CD8-positive, alpha-beta T cell (primary cell): ENCODE measurements at regions of chr4 and their contacts with region 1.

Region 1: GRCh38 chr4:26325191-26325590 is 4.4 kb downstream of the RBPJ start:
- DNase-seq: peak in 5 of 9 experiments; percentile 7 to 71 (median 22)
- ATAC-seq: peak; percentile 35
- H3K4me3 ChIP-seq: no peak overlapping the region
- H3K4me3 Mint-ChIP-seq: no peak overlapping the region
- H3K27ac ChIP-seq: no peak overlapping the region
- H3K27ac Mint-ChIP-seq: no peak overlapping the region
- H3K4me1 ChIP-seq: peaks cover 14% of the 10 kb centered on the region
- H3K4me1 Mint-ChIP-seq: peaks cover 52% of the 10 kb centered on the region
- H3K27me3 ChIP-seq: no peaks in the 10 kb centered on the region
- H3K27me3 Mint-ChIP-seq: no peaks in the 10 kb centered on the region
- CTCF ChIP-seq: peak; percentile 53

Region 2: DNA sequence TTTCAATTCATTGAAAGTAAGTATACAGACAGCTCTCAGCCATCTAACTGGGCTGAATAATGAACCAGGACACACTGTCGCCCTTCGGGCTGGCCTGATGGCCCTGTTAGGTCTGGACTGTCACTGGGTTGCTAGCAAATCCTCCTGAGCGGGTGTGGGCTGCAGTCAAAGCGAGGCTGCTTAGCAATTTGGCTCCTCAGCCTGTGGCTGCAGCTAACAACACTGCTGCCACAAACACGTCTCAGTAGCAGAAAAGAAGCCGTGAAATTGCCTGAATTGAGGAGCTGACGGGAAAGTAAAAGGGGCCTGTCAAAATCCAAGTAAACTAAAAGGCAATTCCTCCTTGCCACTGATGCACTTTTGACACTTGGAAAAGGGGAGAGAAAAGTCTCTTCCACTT is 338.4 kb before region 1 on chr4:
- CTCF ChIA-PET with region 1: interaction called, 13 read pairs
- POLR2A ChIA-PET with region 1: no interaction called
- intact Hi-C with region 1: loop called (anchors 1 to 5 kb)
- DNase-seq: no peak
- ATAC-seq: no peak
- H3K4me3 ChIP-seq: no peak overlapping the region
- H3K4me3 Mint-ChIP-seq: no peak overlapping the region
- H3K27ac ChIP-seq: no peak overlapping the region
- H3K27ac Mint-ChIP-seq: no peak overlapping the region
- H3K4me1 ChIP-seq: no peaks in the 10 kb centered on the region
- H3K4me1 Mint-ChIP-seq: peaks cover 4% of the 10 kb centered on the region
- H3K27me3 ChIP-seq: peaks cover 0 to under 1% of the 10 kb centered on the region in 2 experiments
- H3K27me3 Mint-ChIP-seq: peaks cover 5% of the 10 kb centered on the region
- CTCF ChIP-seq: no peak

Region 3: GRCh38 chr4:26028793-26029567 is 296.2 kb before region 1 on chr4:
- CTCF ChIA-PET with region 1: interaction called, 5 read pairs
- POLR2A ChIA-PET with region 1: no interaction called
- intact Hi-C with region 1: loop called (anchors 1 to 2 kb)
- DNase-seq: peak; percentile 27 to 63 (median 46)
- ATAC-seq: peak; percentile 75
- H3K4me3 ChIP-seq: no peak overlapping the region
- H3K4me3 Mint-ChIP-seq: no peak overlapping the region
- H3K27ac ChIP-seq: no peak overlapping the region
- H3K27ac Mint-ChIP-seq: no peak overlapping the region
- H3K4me1 ChIP-seq: no peaks in the 10 kb centered on the region
- H3K4me1 Mint-ChIP-seq: peaks cover 2% of the 10 kb centered on the region
- H3K27me3 ChIP-seq: peaks cover 0 to 2% of the 10 kb centered on the region in 2 experiments
- H3K27me3 Mint-ChIP-seq: peaks cover 19% of the 10 kb centered on the region
- CTCF ChIP-seq: peak; percentile 29

Region 4: GRCh38 chr4:26372525-26373172 is 47.5 kb after region 1 on chr4:
- CTCF ChIA-PET with region 1: interaction called, 6 read pairs
- POLR2A ChIA-PET with region 1: interaction called, 3 read pairs
- intact Hi-C with region 1: loop called (anchors 5 kb)
- DNase-seq: peak; percentile 13 to 84 (median 43)
- ATAC-seq: peak; percentile 81
- H3K4me3 ChIP-seq: no peak overlapping the region
- H3K4me3 Mint-ChIP-seq: no peak overlapping the region
- H3K27ac ChIP-seq: no peak overlapping the region
- H3K27ac Mint-ChIP-seq: no peak overlapping the region
- H3K4me1 ChIP-seq: peaks cover 16% of the 10 kb centered on the region
- H3K4me1 Mint-ChIP-seq: peaks cover 34% of the 10 kb centered on the region
- H3K27me3 ChIP-seq: peaks cover 0 to 2% of the 10 kb centered on the region in 2 experiments
- H3K27me3 Mint-ChIP-seq: peaks cover 2% of the 10 kb centered on the region
- CTCF ChIP-seq: no peak